Naive thymus-derived CD8-positive, alpha-beta T cell (primary cell): ENCODE measurements at regions of chrX and their contacts with region 1.

Region 1: DNA sequence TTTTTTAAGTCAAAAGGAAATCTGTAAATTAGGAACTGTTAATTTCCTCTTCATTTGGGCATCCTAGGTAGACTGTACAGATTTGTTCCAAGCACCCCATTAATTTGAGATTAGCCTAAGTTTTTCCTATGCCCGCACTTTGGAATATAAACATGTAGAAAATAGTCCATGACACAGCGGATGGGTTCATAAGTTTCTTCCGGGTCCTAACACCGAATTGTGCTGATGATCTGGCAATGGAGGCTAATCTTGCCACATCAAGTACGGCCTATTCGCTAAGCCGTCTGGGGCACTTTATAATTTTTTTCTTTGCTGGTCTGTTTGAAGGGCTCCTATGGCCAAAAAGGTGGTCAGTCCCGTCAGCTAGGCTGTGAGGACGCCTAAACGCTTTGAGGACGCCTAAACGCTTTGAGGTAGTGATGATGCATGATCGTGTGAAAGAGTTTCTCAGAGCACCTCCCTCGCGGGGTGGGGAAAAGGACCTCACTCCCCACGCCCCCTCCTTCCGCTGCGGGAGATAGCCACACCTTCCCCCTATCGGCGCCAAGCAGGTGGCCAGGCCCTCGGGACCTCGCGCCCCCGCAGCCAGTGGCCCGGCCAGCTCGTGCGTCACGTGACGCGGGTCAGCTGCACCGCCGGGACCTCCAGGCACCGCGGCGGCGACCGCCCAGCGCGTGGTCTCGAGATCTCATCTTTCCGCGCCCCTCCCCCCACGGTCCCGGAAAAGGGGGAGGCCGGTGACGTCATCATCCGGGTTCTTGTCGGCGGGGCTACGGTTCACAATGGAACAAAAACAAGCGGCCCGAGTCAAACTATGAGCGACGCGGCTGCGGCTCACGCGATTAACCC is 977 bp upstream of the USP9X start:
- DNase-seq: peak; percentile 92 to 100 (median 96)
- ATAC-seq: peak; percentile 66 to 67
- H3K4me3 Mint-ChIP-seq: peak overlapping the region; percentile 89 to 97 (median 92)
- H3K27ac Mint-ChIP-seq: peak overlapping the region; percentile 98 to 100 (median 100)
- H3K4me1 Mint-ChIP-seq: peaks cover 0 to 28% (median 11%) of the 10 kb centered on the region in 4 donors
- H3K27me3 Mint-ChIP-seq: no peaks in the 10 kb centered on the region

Region 2: GRCh38 chrX:40735325-40736169 is 348.7 kb before region 1 on chrX and contains the start of gene MED14:
- POLR2A ChIA-PET with region 1: interaction called, 10 read pairs
- DNase-seq: peak; percentile 83 to 98 (median 93)
- ATAC-seq: peak; percentile 89 to 91
- H3K4me3 Mint-ChIP-seq: peak within 1 kb of the TSS; percentile 91 to 99 (median 92)
- H3K27ac Mint-ChIP-seq: peak within 1 kb of the TSS; percentile 94 to 99 (median 98)
- H3K4me1 Mint-ChIP-seq: peaks cover 13 to 54% (median 47%) of the 10 kb centered on the region in 4 donors
- H3K27me3 Mint-ChIP-seq: no peaks in the 10 kb centered on the region
- polyA plus RNA-seq, gene MED14: 6.0 to 11.7 (median 6.7) TPM

Region 3: GRCh38 chrX:40938423-40938822 is 145.8 kb before region 1 on chrX:
- POLR2A ChIA-PET with region 1: no interaction called
- DNase-seq: no peak
- ATAC-seq: no peak
- H3K4me3 Mint-ChIP-seq: no peak overlapping the region
- H3K27ac Mint-ChIP-seq: no peak overlapping the region
- H3K4me1 Mint-ChIP-seq: peaks cover under 1 to 7% (median 5%) of the 10 kb centered on the region in 4 donors
- H3K27me3 Mint-ChIP-seq: no peaks in the 10 kb centered on the region

Region 4: DNA sequence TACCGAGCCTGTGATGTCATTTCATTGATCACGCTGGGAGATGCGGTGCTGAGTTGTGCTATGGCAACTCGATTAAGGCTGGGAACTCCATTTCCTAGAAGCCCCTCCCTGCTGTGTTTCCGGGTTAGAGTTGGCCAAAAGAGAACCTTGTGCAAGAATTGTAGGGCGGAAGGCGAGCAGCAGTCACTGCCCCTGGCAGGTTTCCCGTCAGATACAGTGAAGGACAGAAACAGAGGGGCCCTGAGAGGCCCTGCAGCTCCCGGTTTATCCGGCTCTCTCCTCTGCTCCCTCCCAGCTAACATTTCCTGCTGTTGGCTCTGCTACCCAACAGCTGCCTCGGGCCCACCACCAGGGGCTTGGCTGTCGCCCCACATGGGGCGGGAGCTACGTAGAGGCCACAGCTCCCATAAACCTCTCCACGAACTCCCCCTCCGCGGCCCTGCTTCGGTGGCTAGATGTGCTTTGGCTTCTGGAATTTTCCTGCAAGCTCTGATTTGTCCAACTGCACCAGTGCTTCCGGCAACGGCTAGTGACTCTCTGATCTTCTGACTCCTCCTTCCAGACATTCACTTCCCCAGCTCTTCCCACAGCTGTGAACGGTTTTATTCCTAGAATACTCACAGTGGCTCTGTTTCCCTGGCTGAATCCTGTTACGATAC is 74.0 kb before region 1 on chrX:
- POLR2A ChIA-PET with region 1: interaction called, 18 read pairs
- DNase-seq: peak; percentile 9 to 79 (median 48)
- ATAC-seq: peak; percentile 91 to 93
- H3K4me3 Mint-ChIP-seq: peak overlapping the region; percentile 69 to 86 (median 80)
- H3K27ac Mint-ChIP-seq: peak overlapping the region; percentile 78 to 97 (median 90)
- H3K4me1 Mint-ChIP-seq: peaks cover 5 to 24% (median 19%) of the 10 kb centered on the region in 4 donors
- H3K27me3 Mint-ChIP-seq: peaks cover 0 to 3% (median 0%) of the 10 kb centered on the region in 5 donors

Region 5: DNA sequence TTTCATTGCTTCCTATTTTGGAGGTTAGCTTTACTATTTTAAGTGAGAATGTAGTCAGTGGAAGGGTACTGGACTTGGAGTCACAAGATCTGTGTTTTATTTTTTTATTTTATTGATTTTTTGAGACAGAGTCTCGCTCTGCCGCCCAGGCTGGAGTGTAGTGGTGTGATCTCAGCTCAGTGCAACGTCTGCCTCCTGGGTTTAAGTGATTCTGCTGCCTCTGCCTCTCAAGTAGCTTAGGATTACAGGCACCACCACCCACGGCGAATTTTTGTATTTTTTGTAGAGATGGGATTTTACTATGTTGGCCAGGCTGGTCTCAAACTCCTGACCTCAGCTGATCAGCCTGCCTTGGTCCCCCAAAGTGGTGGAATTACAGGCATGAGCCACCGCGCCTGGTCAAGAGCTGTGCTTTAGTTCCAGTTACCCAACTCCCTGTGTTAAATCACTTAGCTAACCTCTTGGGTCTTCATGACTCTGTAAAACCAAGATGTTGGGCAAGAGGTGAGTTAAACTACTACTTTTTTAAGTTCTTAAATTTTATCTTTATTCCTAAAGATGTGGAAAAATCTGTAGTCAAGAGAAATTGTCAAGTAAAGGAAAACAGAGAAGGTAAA is 12.2 kb after region 1 on chrX:
- POLR2A ChIA-PET with region 1: interaction called, 19 read pairs
- DNase-seq: no peak
- ATAC-seq: no peak
- H3K4me3 Mint-ChIP-seq: peak overlapping the region in 7 of 10 donors; percentile 16 to 65 (median 38)
- H3K27ac Mint-ChIP-seq: peak overlapping the region in 4 of 10 donors; percentile 23 to 80 (median 76)
- H3K4me1 Mint-ChIP-seq: peaks cover 16 to 85% (median 71%) of the 10 kb centered on the region in 4 donors
- H3K27me3 Mint-ChIP-seq: no peaks in the 10 kb centered on the region

Region 6: GRCh38 chrX:41110801-41111625 is 26.7 kb after region 1 on chrX:
- POLR2A ChIA-PET with region 1: interaction called, 34 read pairs
- DNase-seq: no peak
- ATAC-seq: peak; percentile 20 to 38
- H3K4me3 Mint-ChIP-seq: peak overlapping the region in 7 of 10 donors; percentile 23 to 77 (median 40)
- H3K27ac Mint-ChIP-seq: peak overlapping the region; percentile 2 to 88 (median 66)
- H3K4me1 Mint-ChIP-seq: peaks cover 33 to 80% (median 69%) of the 10 kb centered on the region in 4 donors
- H3K27me3 Mint-ChIP-seq: no peaks in the 10 kb centered on the region

Region 7: DNA sequence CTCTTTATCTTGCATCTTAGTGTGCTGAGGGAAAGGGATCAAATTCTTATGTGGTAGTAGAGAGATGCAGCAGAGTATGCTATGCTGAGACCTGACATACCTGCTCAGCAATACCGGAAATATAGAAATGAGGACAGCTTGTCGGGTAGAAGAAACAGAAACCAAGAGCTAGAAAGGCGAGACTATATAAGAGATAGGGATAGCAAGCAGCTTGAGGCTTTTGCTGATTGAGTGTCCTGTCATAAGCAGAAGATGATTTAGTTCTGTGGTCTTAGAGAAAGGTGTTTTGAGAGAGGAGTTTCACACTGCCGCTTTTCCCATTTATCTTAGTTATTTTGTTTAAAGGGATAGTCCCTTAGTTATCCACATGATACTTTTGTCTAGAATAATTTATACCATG is 32.7 kb after region 1 on chrX:
- POLR2A ChIA-PET with region 1: interaction called, 34 read pairs
- DNase-seq: peak in 3 of 10 donors; percentile 25 to 43 (median 43)
- ATAC-seq: peak; percentile 73
- H3K4me3 Mint-ChIP-seq: peak overlapping the region; percentile 2 to 79 (median 64)
- H3K27ac Mint-ChIP-seq: peak overlapping the region in 9 of 10 donors; percentile 7 to 88 (median 69)
- H3K4me1 Mint-ChIP-seq: peaks cover 17 to 85% (median 65%) of the 10 kb centered on the region in 4 donors
- H3K27me3 Mint-ChIP-seq: no peaks in the 10 kb centered on the region

Region 8: GRCh38 chrX:41333744-41334259 is 249.5 kb after region 1 on chrX and contains the start of gene DDX3X:
- POLR2A ChIA-PET with region 1: interaction called, 19 read pairs
- DNase-seq: peak; percentile 68 to 97 (median 80)
- ATAC-seq: peak; percentile 48 to 59
- H3K4me3 Mint-ChIP-seq: peak within 1 kb of the TSS; percentile 90 to 99 (median 97)
- H3K27ac Mint-ChIP-seq: peak within 1 kb of the TSS; percentile 97 to 100 (median 100)
- H3K4me1 Mint-ChIP-seq: peaks cover 3 to 48% (median 28%) of the 10 kb centered on the region in 4 donors
- H3K27me3 Mint-ChIP-seq: peaks cover 0 to 5% (median 0%) of the 10 kb centered on the region in 5 donors
- polyA plus RNA-seq, gene DDX3X: 181 to 272 (median 215) TPM